KBM-7 (cell line): ENCODE measurements at regions of chr9 and their contacts with region 1.

Region 1: DNA sequence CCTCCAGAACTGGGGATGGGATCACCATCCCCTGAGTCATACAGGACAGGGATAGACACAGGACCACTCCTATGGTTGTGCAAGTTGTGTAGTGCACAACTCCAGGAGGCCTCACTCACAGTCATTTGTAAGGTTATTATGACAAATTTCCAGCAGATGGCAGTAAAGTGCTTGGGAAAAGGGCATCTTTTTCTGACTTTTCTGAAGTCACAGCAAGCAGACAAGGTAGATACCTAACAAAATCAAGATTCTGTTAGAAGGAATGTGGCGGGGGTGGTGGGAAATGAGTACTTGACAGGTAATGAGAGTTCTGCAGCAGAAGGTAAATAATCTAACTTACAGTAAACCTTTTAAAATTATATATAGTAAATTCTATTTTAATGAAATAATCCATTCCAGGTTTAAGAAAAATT is 16.7 kb upstream of the KIF27 start:
- DNase-seq: peak; percentile 80

Region 2: GRCh38 chr9:84261082-84261746 is 323.3 kb after region 1 on chr9:
- in situ Hi-C with region 1: loop called (anchors 25 kb)
- DNase-seq: peak; percentile 71